A549 (cell line): ENCODE measurements at regions of chr7 and their contacts with region 1.

Region 1: GRCh38 chr7:151017953-151018420 is 6.3 kb downstream of the ATG9B start:
- DNase-seq: peak; percentile 55 to 71
- ATAC-seq: peak; percentile 72 to 94
- H3K4me3 ChIP-seq: peak overlapping the region; percentile 30; the same call in 2 of the 3 replicates
- H3K27ac ChIP-seq: peak overlapping the region in 1 of 2 experiments; percentile 75; a peak in 2 of 6 replicates
- H3K4me1 ChIP-seq: peaks cover 6% of the 10 kb centered on the region; the same call in 2 of the 3 replicates
- CTCF ChIP-seq: peak; percentile 88
- EP300 ChIP-seq: no peak
- POLR2A ChIP-seq: no peak
- RAD21 ChIP-seq: peak; percentile 58 to 64

Region 2: DNA sequence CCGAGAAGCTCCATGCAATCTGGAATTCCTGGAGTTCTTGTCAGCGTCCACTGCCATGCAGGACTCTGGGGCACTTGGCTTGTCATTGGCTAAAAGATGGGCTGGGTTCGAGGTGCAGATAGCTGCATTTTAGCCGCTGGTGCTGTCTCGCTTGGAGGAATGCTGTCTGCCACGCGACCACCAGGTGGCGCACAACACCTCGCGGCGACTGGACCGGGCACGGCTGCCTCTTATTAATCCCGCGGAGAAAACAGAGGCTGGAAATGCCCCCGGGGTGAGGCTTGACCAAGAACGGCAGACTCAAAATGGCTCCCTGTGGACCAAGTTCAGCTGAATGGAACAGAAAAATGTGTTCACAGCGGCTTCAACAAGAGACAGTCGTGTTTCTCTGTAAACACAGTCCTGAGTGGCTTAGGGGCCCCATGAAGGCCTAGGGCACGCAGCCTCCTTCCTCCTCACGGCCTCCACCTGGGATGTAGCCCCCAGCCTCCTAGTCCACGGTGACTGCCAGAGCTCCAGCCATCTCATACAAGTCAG is 119.4 kb before region 1 on chr7:
- CTCF ChIA-PET with region 1: interaction called, 19 read pairs
- POLR2A ChIA-PET with region 1: no interaction called
- DNase-seq: peak; percentile 68 to 79
- ATAC-seq: peak; percentile 83 to 95
- H3K4me3 ChIP-seq: no peak overlapping the region
- H3K27ac ChIP-seq: no peak overlapping the region
- H3K4me1 ChIP-seq: no peaks in the 10 kb centered on the region
- CTCF ChIP-seq: peak; percentile 84
- EP300 ChIP-seq: no peak
- POLR2A ChIP-seq: no peak
- RAD21 ChIP-seq: peak; percentile 73 to 74

Region 3: GRCh38 chr7:150968734-150969372 is 49.1 kb before region 1 on chr7:
- CTCF ChIA-PET with region 1: interaction called, 34 read pairs
- POLR2A ChIA-PET with region 1: no interaction called
- DNase-seq: no peak
- ATAC-seq: no peak
- H3K4me3 ChIP-seq: no peak overlapping the region
- H3K27ac ChIP-seq: no peak overlapping the region
- H3K4me1 ChIP-seq: no peaks in the 10 kb centered on the region
- CTCF ChIP-seq: no peak
- EP300 ChIP-seq: no peak
- POLR2A ChIP-seq: no peak
- RAD21 ChIP-seq: no peak

Region 4: GRCh38 chr7:150988230-150989226 is 29.5 kb before region 1 on chr7:
- CTCF ChIA-PET with region 1: interaction called, 39 read pairs
- POLR2A ChIA-PET with region 1: no interaction called
- DNase-seq: peak in 1 of 2 experiments; percentile 36
- ATAC-seq: peak; percentile 5 to 69; a peak in 4 of 6 replicates
- H3K4me3 ChIP-seq: no peak overlapping the region
- H3K27ac ChIP-seq: no peak overlapping the region
- H3K4me1 ChIP-seq: no peaks in the 10 kb centered on the region
- CTCF ChIP-seq: peak; percentile 62
- EP300 ChIP-seq: no peak
- POLR2A ChIP-seq: no peak
- RAD21 ChIP-seq: peak; percentile 64 to 77

Region 5: GRCh38 chr7:151038951-151039849 is 21.2 kb after region 1 on chr7:
- CTCF ChIA-PET with region 1: interaction called, 34 read pairs
- POLR2A ChIA-PET with region 1: no interaction called
- DNase-seq: peak; percentile 79 to 93
- ATAC-seq: peak; percentile 81 to 88
- H3K4me3 ChIP-seq: no peak overlapping the region
- H3K27ac ChIP-seq: peak overlapping the region; percentile 79 to 88
- H3K4me1 ChIP-seq: peaks cover 33% of the 10 kb centered on the region
- CTCF ChIP-seq: no peak
- EP300 ChIP-seq: no peak
- POLR2A ChIP-seq: peak; percentile 48
- RAD21 ChIP-seq: peak in 1 of 2 experiments; percentile 5; a peak in 2 of 5 replicates

Region 6: GRCh38 chr7:151085691-151086620 is 68.0 kb after region 1 on chr7 and contains the start of gene AGAP3:
- CTCF ChIA-PET with region 1: interaction called, 10 read pairs
- POLR2A ChIA-PET with region 1: no interaction called
- DNase-seq: peak; percentile 76 to 79
- ATAC-seq: peak; percentile 50 to 74
- H3K4me3 ChIP-seq: peak within 1 kb of the TSS; percentile 86
- H3K27ac ChIP-seq: peak within 1 kb of the TSS; percentile 84 to 98
- H3K4me1 ChIP-seq: peaks cover 43% of the 10 kb centered on the region
- CTCF ChIP-seq: no peak
- EP300 ChIP-seq: no peak
- POLR2A ChIP-seq: peak; percentile 81
- RAD21 ChIP-seq: no peak
- polyA plus RNA-seq, gene AGAP3: 33.8 and 34.1 TPM in 2 replicates